Common myeloid progenitor, CD34-positive (primary cell): ENCODE measurements at regions of chr3 and their contacts with region 1.

Region 1: DNA sequence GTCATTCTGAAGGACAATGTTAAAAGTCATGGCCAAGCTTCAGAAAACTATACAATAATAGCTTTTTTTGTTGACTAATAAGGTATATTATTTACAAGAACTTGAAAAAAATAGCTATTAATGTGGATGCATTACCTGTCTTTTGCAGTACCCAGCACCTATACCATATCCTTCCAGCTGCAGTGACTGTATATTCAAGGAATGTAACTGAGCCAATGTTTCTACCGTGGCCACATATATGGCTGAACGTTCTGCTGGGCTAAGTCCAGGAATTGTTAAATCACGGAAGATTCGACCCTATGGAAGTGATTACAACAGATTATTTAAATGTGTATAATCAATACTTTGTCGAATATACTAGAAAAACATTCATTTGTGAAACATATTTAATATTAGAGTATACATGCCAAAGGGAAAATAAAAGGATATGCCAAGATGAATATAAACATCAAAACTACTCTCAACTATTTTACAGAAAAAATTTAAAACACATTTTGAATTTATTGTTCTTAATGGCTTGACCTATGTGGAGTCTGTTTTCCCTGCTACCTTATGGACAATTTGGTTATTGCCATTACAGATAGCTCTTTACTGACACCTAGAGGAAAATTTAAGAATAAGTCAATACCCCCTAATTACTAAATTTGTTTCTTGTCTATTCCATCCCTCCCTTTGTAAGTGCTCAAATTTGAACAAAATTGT is 17.6 kb downstream of the ACAD11 start:
- DNase-seq: peak; percentile 45 to 72 (median 62)
- H3K4me3 ChIP-seq: no peak overlapping the region
- H3K27ac ChIP-seq: no peak overlapping the region
- H3K4me1 ChIP-seq: peaks cover 0 to 3% (median 1%) of the 10 kb centered on the region in 4 experiments
- H3K27me3 ChIP-seq: no peaks in the 10 kb centered on the region

Region 2: DNA sequence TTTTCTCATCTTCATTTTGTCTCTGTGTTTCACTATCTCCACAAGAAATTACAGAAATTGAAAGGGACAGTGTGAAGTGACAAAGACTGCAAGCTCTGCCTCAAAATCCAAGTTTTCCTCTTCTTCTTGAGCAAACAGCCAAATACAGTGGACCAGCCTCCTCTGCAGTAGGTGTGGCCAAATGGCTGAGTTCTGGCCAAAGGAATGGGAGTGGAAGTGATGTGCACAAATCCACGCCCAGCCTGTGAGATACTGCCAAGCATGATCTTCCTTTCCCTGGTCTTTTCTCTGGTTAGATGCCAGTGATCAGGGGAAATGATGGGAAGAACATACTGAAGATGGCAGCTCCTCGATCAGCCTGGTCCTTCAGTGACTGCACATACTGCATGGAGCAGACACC is 496.2 kb before region 1 on chr3:
- CTCF ChIA-PET with region 1: no interaction called
- POLR2A ChIA-PET with region 1: no interaction called
- DNase-seq: no peak
- H3K4me3 ChIP-seq: no peak overlapping the region
- H3K27ac ChIP-seq: no peak overlapping the region
- H3K4me1 ChIP-seq: no peaks in the 10 kb centered on the region
- H3K27me3 ChIP-seq: peaks cover 0 to 3% (median 0%) of the 10 kb centered on the region in 5 experiments

Region 3: DNA sequence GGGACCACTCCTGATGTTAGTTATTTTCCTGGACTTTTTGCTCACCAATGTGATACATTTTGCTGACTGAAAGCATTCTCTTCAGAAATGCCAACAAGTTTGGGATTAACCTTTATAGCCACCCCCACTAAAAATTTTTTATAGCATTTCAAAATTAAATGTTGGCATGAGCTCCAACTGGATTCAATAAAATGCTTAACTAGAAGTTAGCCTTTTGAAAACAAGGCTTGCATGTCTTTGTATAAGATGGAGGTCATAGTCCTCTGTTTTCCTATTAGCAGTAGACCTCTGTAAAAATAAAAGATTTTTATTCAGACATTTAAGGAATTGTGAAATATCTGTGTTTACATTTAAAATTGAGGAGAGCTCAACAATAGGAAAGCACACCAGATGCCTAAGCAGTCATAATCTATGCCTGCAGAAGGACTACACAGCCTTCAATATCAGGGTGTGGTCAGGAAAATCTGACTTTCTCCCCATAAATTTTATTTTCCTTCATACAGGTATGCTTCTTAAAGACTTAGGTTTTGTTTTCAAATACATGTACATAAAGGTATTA is 137.5 kb before region 1 on chr3:
- CTCF ChIA-PET with region 1: no interaction called
- POLR2A ChIA-PET with region 1: no interaction called
- DNase-seq: no peak
- H3K4me3 ChIP-seq: no peak overlapping the region
- H3K27ac ChIP-seq: no peak overlapping the region
- H3K4me1 ChIP-seq: no peaks in the 10 kb centered on the region
- H3K27me3 ChIP-seq: no peaks in the 10 kb centered on the region

Region 4: DNA sequence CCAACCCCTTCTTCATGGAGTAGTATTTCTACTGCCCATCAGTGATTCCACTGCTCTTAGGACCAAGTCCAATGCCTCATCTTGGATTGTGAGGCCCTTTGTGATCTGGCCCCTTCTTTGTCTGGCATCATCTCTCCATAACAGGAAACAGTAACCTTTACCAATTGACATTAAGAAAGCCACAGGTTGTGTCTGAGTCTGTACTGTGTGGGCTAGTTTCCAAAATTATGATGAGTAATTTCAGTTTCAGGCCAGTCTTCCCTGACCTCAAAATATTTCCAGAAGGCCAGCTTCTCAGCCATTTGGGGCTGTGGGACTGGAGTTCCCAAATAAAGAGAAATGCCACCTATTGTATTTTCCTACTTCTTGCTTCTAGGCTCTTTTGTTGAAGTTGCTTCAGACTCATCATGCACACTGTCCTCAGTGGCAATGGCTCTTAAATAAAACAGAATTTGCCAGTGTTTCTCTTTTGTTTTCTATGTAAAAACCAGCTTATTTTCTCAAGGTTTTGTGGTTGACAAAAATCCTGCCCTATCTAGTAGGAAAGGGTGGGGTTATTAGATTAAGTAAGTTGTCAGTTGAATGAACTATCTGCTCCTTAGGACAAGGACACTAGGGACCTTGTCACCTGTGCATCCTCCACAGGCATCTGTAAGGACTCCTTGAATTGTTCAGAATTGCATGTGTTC is 92.0 kb before region 1 on chr3:
- CTCF ChIA-PET with region 1: interaction called, 14 read pairs
- POLR2A ChIA-PET with region 1: no interaction called
- DNase-seq: peak in 2 of 3 donors; percentile 20 to 35
- H3K4me3 ChIP-seq: peak overlapping the region in 2 of 7 experiments; percentile 45 to 51
- H3K27ac ChIP-seq: peak overlapping the region in 1 of 2 experiments; percentile 67
- H3K4me1 ChIP-seq: peaks cover 16 to 29% (median 22%) of the 10 kb centered on the region in 4 experiments
- H3K27me3 ChIP-seq: no peaks in the 10 kb centered on the region

Region 5: DNA sequence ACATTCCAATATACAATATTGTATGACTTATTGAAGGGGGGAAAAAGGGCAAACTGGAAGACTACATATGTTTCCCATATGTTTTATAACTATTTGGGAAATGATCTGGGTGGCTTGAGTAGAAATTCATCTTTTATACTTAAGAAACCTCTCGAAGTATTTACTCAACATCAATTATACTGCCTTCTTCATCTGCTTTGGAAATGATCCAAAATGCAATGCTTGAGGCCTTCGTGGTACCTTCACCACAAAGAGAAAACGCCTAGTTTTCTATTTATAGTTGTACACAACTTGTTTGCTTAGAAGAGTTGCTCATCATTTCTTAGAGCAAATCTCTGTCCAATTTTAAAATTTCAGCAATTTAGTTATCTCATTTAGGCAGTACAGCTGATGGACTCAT is 26.1 kb before region 1 on chr3:
- CTCF ChIA-PET with region 1: no interaction called
- POLR2A ChIA-PET with region 1: no interaction called
- DNase-seq: no peak
- H3K4me3 ChIP-seq: no peak overlapping the region
- H3K27ac ChIP-seq: no peak overlapping the region
- H3K4me1 ChIP-seq: no peaks in the 10 kb centered on the region
- H3K27me3 ChIP-seq: no peaks in the 10 kb centered on the region

Region 6: GRCh38 chr3:132652640-132653270 is 10.8 kb after region 1 on chr3:
- CTCF ChIA-PET with region 1: interaction called, 10 read pairs
- POLR2A ChIA-PET with region 1: no interaction called
- DNase-seq: no peak
- H3K4me3 ChIP-seq: no peak overlapping the region
- H3K27ac ChIP-seq: no peak overlapping the region
- H3K4me1 ChIP-seq: peaks cover 0 to 2% (median 0%) of the 10 kb centered on the region in 4 experiments
- H3K27me3 ChIP-seq: no peaks in the 10 kb centered on the region